PC-9 (cell line): ENCODE measurements at regions of chr17 and their contacts with region 1.

Region 1: GRCh38 chr17:49880291-49881053 is 32.6 kb upstream of the TAC4 start:
- DNase-seq: peak; percentile 65 to 88
- H3K4me3 ChIP-seq: peak overlapping the region; percentile 23; the same call in 1 of the 2 replicates
- H3K27ac ChIP-seq: no peak overlapping the region
- H3K4me1 ChIP-seq: peaks cover 19% of the 10 kb centered on the region
- H3K27me3 ChIP-seq: no peaks in the 10 kb centered on the region
- CTCF ChIP-seq: peak; percentile 99

Region 2: DNA sequence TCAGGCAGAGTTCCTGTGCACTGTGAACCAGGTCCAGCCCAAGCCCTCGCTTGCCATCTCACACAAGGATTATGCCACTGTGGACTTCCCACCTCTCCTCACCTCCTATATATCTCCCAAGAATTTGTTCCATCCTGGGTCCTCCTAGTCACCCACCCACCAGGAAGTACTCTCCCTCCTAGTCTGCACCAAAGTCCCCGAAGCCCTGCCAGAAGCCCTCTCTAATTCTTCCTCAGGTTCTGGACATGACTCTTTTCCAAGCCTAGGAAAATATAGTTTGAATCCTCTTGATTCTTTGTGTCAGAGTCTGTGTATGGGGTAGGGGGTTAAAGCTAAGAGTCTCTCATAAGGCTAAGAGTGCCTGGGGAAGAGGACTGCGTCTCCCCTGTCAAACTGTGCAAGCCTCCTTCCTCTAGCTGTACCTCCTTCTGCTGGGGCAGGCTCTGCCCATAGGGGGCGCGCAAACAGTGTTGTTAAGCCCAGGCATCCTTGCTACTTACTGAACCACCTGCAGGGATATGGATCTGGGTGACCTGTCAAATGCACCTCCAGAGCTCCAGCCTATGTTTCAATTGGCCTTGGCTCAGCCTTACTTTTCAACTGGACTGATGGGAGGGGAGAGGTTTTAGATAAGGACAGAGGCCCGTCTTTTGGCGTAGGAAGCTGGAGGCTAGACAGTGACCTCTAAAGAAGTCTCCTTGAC is 71.9 kb after region 1 on chr17:
- CTCF ChIA-PET with region 1: no interaction called
- POLR2A ChIA-PET with region 1: no interaction called
- intact Hi-C with region 1: loop called (anchors 2 kb)
- DNase-seq: peak; percentile 70 to 83
- H3K4me3 ChIP-seq: no peak overlapping the region
- H3K27ac ChIP-seq: no peak overlapping the region
- H3K4me1 ChIP-seq: no peaks in the 10 kb centered on the region
- H3K27me3 ChIP-seq: peaks cover 3% of the 10 kb centered on the region; the same call in 1 of the 2 replicates
- CTCF ChIP-seq: peak; percentile 97